Transverse colon (tissue), 4 donors: ENCODE measurements at regions of chr2 and their contacts with region 1.

Region 1: GRCh38 chr2:180927030-180927686 is 53.2 kb upstream of the UBE2E3 start:
- DNase-seq: no peak
- H3K4me3 ChIP-seq: no peak overlapping the region
- H3K27ac ChIP-seq: peak overlapping the region; percentile 1 to 36 (median 34)
- H3K4me1 ChIP-seq: peaks cover 0 to 8% (median 0%) of the 10 kb centered on the region in 4 donors
- H3K27me3 ChIP-seq: no peaks in the 10 kb centered on the region
- CTCF ChIP-seq: no peak
- EP300 ChIP-seq: no peak
- POLR2A ChIP-seq: no peak

Region 2: DNA sequence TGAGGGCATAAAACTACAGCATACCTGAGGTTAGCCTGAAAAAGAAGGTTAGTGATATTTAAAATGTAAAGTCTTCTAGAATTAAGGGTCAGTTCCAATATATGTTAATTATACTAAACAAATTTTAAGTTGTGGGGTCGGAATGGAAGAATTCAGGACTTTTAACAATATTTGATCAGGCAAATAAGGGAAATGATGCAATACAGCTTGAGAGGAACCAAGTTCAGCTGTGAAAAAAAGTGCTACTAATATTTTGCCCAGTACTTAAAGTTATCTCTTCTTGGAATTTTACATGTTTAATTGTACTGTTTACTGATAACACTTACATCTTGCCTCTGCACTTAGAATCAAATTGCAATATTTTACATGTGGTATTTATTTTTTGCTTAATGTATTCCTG is 574.5 kb before region 1 on chr2:
- in situ Hi-C with region 1: no loop called
- intact Hi-C with region 1: loop called (anchors 5 kb)
- DNase-seq: no peak
- H3K4me3 ChIP-seq: no peak overlapping the region
- H3K27ac ChIP-seq: no peak overlapping the region
- H3K4me1 ChIP-seq: no peaks in the 10 kb centered on the region
- H3K27me3 ChIP-seq: no peaks in the 10 kb centered on the region
- CTCF ChIP-seq: no peak
- EP300 ChIP-seq: no peak
- POLR2A ChIP-seq: no peak

Region 3: GRCh38 chr2:181123798-181124231 is 196.7 kb after region 1 on chr2:
- in situ Hi-C with region 1: no loop called
- intact Hi-C with region 1: no loop called
- DNase-seq: peak; percentile 17
- H3K4me3 ChIP-seq: no peak overlapping the region
- H3K27ac ChIP-seq: peak overlapping the region; percentile 12 to 63 (median 32)
- H3K4me1 ChIP-seq: no peaks in the 10 kb centered on the region
- H3K27me3 ChIP-seq: no peaks in the 10 kb centered on the region
- CTCF ChIP-seq: no peak
- EP300 ChIP-seq: no peak
- POLR2A ChIP-seq: peak; percentile 24

Region 4: GRCh38 chr2:181723731-181724130 is 796.6 kb after region 1 on chr2:
- in situ Hi-C with region 1: no loop called
- intact Hi-C with region 1: no loop called
- DNase-seq: no peak
- H3K4me3 ChIP-seq: no peak overlapping the region
- H3K27ac ChIP-seq: no peak overlapping the region
- H3K4me1 ChIP-seq: no peaks in the 10 kb centered on the region
- H3K27me3 ChIP-seq: peaks cover 3% of the 10 kb centered on the region
- CTCF ChIP-seq: no peak
- EP300 ChIP-seq: no peak
- POLR2A ChIP-seq: no peak